Activated CD8-positive, alpha-beta T cell treated with anti-CD3 and anti-CD28 coated beads for 36 hours (primary cell): ENCODE measurements at regions of chr14 and their contacts with region 1.

Region 1: GRCh38 chr14:54488646-54489317 is at the start of gene GMFB:
- DNase-seq: peak; percentile 92
- ATAC-seq: peak; percentile 96
- H3K4me3 Mint-ChIP-seq: peak within 1 kb of the TSS; percentile 88
- H3K27ac Mint-ChIP-seq: peak within 1 kb of the TSS; percentile 92
- H3K4me1 Mint-ChIP-seq: peaks cover 44% of the 10 kb centered on the region
- H3K27me3 Mint-ChIP-seq: no peaks in the 10 kb centered on the region
- CTCF ChIP-seq: peak; percentile 37
- total RNA-seq, gene GMFB: 29.2 to 32.1 TPM

Region 2: GRCh38 chr14:54440873-54441868 is 47.6 kb before region 1 on chr14 and contains the start of gene CNIH1:
- CTCF ChIA-PET with region 1: interaction called, 8 read pairs
- POLR2A ChIA-PET with region 1: interaction called, 4 read pairs
- intact Hi-C with region 1: loop called (anchors 5 kb)
- DNase-seq: peak; percentile 92
- ATAC-seq: peak; percentile 92
- H3K4me3 Mint-ChIP-seq: peak within 1 kb of the TSS; percentile 98
- H3K27ac Mint-ChIP-seq: peak within 1 kb of the TSS; percentile 97
- H3K4me1 Mint-ChIP-seq: peaks cover 50% of the 10 kb centered on the region
- H3K27me3 Mint-ChIP-seq: peaks cover 2% of the 10 kb centered on the region
- CTCF ChIP-seq: peak; percentile 99
- total RNA-seq, gene CNIH1: 82.0 to 82.7 TPM

Region 3: DNA sequence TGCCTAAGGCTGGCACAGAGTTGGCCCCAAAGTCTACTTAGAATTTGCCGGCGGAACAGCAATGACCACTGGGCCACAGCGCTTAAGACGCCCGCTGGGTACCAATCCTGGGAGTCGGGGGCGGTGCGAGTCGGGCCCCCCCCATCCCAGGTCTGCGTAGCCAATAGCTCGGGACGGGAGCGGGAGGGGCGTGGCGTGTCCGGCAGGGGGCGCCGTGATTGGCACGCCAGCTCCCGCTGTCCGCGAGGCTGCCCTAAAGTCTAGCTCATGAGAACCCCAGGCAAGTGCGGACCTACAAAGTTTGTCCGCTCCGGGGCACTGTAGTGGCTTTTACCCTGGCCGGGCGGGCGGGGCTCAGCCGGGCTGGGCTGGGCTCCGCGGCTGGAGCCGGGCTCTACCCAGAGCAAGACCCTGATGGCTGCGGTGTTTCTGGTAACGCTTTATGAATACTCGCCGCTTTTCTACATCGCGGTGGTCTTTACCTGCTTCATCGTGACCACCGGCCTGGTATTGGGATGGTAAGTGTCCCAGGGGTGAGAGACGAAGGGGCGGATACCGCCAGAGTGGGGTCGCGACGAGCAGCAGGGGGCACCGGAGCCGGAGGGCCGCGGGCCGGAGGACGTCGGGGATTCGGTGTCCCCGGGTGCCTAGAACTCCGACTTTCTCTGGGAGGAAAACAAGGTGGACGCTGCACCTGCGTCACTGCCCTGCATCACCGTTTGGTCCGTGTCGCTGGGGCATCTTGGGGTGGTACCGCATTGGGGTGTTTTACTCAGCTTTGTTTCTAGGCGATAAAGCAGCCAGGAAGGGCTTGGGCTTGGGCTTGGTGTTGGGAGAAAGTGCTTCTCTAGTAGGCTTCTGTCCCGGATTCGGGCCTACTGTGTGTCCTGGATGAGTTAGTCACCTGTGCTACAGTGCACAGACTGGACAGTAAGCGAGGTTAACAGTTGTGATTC is 21.0 kb after region 1 on chr14 and contains the start of gene CGRRF1:
- CTCF ChIA-PET with region 1: interaction called, 12 read pairs
- POLR2A ChIA-PET with region 1: interaction called, 8 read pairs
- intact Hi-C with region 1: no loop called
- DNase-seq: peak; percentile 99
- ATAC-seq: peak; percentile 98
- H3K4me3 Mint-ChIP-seq: peak within 1 kb of the TSS; percentile 92
- H3K27ac Mint-ChIP-seq: peak within 1 kb of the TSS; percentile 82
- H3K4me1 Mint-ChIP-seq: peaks cover 39% of the 10 kb centered on the region
- H3K27me3 Mint-ChIP-seq: peaks cover 2% of the 10 kb centered on the region
- CTCF ChIP-seq: no peak
- total RNA-seq, gene CGRRF1: 9.6 to 10.0 TPM